ENCODE measurements at regions of chr18 and their contacts with region 1.

Region 1: GRCh38 chr18:54119524-54120019 is 104.9 kb downstream of the MBD2 start:
- DNase-seq: peak; percentile 55
- ATAC-seq: peak; percentile 93
- H3K4me3 ChIP-seq: peak overlapping the region; percentile 13 to 40; a peak in 3 of 4 replicates
- H3K27ac ChIP-seq: no peak overlapping the region
- H3K4me1 ChIP-seq: peaks cover 0 to 6% of the 10 kb centered on the region in 2 experiments; a peak in 1 of 4 replicates
- H3K27me3 ChIP-seq: no peaks in the 10 kb centered on the region
- CTCF ChIP-seq: peak; percentile 53 to 88 (median 76); a peak in 5 of 6 replicates
- POLR2A ChIP-seq: no peak
- RAD21 ChIP-seq: peak; percentile 75

Region 2: GRCh38 chr18:53489266-53489665 is 630.3 kb before region 1 on chr18:
- CTCF ChIA-PET with region 1: no interaction called
- POLR2A ChIA-PET with region 1: no interaction called
- RAD21 ChIA-PET with region 1: no interaction called
- intact Hi-C with region 1: no loop called
- DNase-seq: no peak
- ATAC-seq: no peak
- H3K4me3 ChIP-seq: no peak overlapping the region
- H3K27ac ChIP-seq: no peak overlapping the region
- H3K4me1 ChIP-seq: no peaks in the 10 kb centered on the region
- H3K27me3 ChIP-seq: no peaks in the 10 kb centered on the region
- CTCF ChIP-seq: no peak
- POLR2A ChIP-seq: no peak
- RAD21 ChIP-seq: no peak

Region 3: DNA sequence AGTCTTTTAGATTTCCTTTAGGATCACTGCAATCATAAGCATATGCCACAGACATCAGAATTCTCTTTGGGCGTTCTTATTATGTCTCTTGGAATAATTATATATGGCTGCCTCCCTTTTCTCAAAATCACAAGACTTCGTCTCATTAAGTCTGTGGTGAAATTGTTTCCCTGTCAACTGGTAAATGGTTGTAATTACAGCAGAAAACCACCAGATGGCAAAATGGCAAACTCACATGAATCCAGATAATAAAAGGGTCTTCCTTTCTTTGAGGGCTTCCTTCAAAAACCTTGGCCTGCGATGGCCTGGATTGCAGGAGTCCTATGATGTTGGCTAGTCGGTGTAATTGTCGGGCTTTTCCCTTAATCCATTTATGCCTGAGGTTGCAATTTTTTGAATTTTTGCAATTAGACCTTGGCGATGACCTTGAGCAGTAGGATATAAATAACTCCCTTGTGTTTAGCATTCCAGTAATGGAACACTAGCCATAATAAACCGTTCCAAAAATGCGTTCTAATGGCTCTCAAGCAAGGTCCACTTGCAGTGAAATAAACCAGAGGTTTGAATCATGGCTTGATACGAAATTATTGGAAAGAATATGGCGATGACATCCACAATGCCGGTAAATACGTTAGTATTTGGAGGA is 551.5 kb before region 1 on chr18:
- CTCF ChIA-PET with region 1: interaction called, 12 read pairs
- POLR2A ChIA-PET with region 1: no interaction called
- RAD21 ChIA-PET with region 1: interaction called in 1 of 2 experiments, 3 read pairs
- intact Hi-C with region 1: loop called (anchors 1 kb)
- DNase-seq: no peak
- ATAC-seq: no peak
- H3K4me3 ChIP-seq: no peak overlapping the region
- H3K27ac ChIP-seq: no peak overlapping the region
- H3K4me1 ChIP-seq: no peaks in the 10 kb centered on the region
- H3K27me3 ChIP-seq: no peaks in the 10 kb centered on the region
- CTCF ChIP-seq: peak; percentile 11 to 48 (median 46); a peak in 4 of 6 replicates
- POLR2A ChIP-seq: no peak
- RAD21 ChIP-seq: peak; percentile 30; the same call in 1 of the 2 replicates

Region 4: DNA sequence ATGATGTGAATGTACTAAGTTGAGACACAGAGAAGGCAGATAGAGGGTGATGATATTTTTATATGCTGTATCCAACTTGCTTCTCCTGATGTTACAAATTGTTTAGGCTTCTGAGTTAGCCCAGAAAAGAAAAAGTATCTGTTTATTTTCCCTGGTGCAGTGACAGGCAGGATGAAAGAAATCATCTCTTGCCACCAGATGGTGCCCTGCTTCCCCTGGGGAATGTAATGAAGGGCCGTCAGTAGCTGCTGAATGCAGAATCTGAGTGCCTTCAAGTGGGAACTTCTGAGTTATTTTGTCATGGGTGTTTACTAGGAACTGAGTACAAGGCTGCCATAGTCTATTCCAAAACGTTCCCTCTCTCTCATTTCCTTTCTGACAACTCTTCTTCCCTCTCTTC is 420.7 kb before region 1 on chr18:
- CTCF ChIA-PET with region 1: interaction called, 7 read pairs
- POLR2A ChIA-PET with region 1: no interaction called
- RAD21 ChIA-PET with region 1: no interaction called
- intact Hi-C with region 1: loop called (anchors 1 kb)
- DNase-seq: no peak
- ATAC-seq: no peak
- H3K4me3 ChIP-seq: no peak overlapping the region
- H3K27ac ChIP-seq: no peak overlapping the region
- H3K4me1 ChIP-seq: no peaks in the 10 kb centered on the region
- H3K27me3 ChIP-seq: no peaks in the 10 kb centered on the region
- CTCF ChIP-seq: peak; percentile 10 to 38 (median 14); a peak in 2 of 6 replicates
- POLR2A ChIP-seq: no peak
- RAD21 ChIP-seq: peak; percentile 16; the same call in 1 of the 2 replicates

Region 5: DNA sequence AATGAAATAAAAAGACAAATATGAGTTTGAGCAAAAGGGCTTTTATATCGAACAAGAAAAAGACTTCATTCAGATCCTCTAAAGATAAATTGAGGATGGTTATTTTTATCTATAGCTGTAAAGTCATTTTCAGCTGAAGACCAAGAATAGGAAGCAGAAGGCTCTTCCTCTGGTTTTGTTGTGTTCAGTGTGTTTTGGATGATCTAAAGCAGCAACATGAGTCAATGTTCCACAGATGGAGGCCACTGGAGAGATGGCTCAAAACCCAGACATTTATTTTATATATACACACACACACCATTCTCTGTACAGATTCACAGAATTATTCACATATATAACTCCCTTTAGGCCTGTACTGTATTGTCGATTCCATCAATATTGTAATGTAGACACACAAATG is 319.4 kb before region 1 on chr18:
- CTCF ChIA-PET with region 1: no interaction called
- POLR2A ChIA-PET with region 1: no interaction called
- RAD21 ChIA-PET with region 1: no interaction called
- intact Hi-C with region 1: no loop called
- DNase-seq: no peak
- ATAC-seq: no peak
- H3K4me3 ChIP-seq: no peak overlapping the region
- H3K27ac ChIP-seq: no peak overlapping the region
- H3K4me1 ChIP-seq: no peaks in the 10 kb centered on the region
- H3K27me3 ChIP-seq: no peaks in the 10 kb centered on the region
- CTCF ChIP-seq: no peak
- POLR2A ChIP-seq: no peak
- RAD21 ChIP-seq: no peak

Region 6: GRCh38 chr18:53909668-53910067 is 209.9 kb before region 1 on chr18:
- CTCF ChIA-PET with region 1: no interaction called
- POLR2A ChIA-PET with region 1: no interaction called
- RAD21 ChIA-PET with region 1: no interaction called
- intact Hi-C with region 1: loop called (anchors 1 kb)
- DNase-seq: peak; percentile 19
- ATAC-seq: peak; percentile 63
- H3K4me3 ChIP-seq: no peak overlapping the region
- H3K27ac ChIP-seq: no peak overlapping the region
- H3K4me1 ChIP-seq: no peaks in the 10 kb centered on the region
- H3K27me3 ChIP-seq: no peaks in the 10 kb centered on the region
- CTCF ChIP-seq: peak; percentile 6 to 68 (median 67); a peak in 4 of 6 replicates
- POLR2A ChIP-seq: no peak
- RAD21 ChIP-seq: peak; percentile 45

Region 7: DNA sequence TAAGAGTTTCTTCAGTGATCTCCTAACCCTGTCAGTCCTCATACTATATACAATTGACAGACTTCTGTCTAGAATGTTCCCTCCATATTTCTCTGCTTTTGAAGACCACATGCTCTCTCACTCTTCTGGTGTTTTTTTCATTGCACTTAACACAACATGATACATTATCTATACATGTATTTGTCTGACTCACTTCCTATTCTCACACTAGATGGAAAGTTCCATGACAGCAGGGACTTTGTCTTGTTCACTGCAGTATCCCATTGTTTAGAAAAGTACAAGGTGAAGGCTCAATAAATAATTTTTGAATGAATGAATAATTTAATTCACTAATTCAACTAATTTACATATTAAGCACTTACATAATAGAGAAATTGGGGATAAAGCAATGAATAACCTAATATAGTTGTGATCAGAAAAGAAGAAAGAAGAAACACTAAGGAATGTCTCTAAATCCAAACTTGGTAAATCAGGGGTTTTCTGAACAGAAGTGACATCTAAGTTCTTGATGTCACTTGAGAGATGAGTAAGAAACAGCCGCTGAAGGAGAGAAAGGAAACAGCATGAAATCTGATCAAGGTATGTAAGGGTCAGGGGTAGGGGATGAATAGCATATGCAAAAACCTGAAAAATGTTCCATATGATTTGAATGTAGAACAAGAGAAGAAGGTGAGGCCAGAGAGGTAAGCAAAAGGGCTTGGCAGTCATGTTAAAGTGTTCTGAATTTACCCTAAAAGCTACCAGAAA is 62.5 kb after region 1 on chr18:
- CTCF ChIA-PET with region 1: no interaction called
- POLR2A ChIA-PET with region 1: no interaction called
- RAD21 ChIA-PET with region 1: no interaction called
- intact Hi-C with region 1: no loop called
- DNase-seq: no peak
- ATAC-seq: no peak
- H3K4me3 ChIP-seq: no peak overlapping the region
- H3K27ac ChIP-seq: no peak overlapping the region
- H3K4me1 ChIP-seq: no peaks in the 10 kb centered on the region
- H3K27me3 ChIP-seq: no peaks in the 10 kb centered on the region
- CTCF ChIP-seq: no peak
- POLR2A ChIP-seq: no peak
- RAD21 ChIP-seq: no peak

Region 8: DNA sequence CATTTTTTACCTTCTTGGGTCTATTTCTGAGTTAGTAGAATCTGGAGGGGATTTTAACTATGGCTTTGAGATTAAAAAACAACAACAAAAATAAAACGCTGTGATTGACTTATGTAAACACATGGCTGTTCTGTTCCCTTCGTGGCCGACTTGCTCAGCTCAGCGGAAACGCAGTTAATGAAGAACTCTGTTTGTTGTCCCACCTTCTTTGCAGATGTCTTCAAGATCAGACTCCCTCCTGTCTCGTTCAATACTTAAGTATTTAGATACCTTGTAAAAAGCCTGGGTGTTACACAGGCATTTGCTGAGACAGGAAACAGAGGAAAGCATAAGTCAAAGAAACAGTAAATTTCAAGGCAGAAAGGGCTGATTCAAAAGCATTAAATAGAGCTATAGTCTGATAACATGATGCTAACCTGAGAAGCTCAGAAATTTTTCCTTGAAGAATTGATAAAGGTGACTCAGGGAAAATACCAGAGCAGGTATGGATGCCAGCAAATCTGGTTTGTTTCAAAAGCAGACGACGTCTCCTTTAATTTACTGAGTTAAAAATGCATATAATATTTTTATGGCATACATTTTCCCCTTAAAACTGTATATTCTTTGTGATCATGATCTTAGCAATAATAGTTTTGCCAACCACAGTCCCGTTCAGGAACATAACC is 128.1 kb after region 1 on chr18:
- CTCF ChIA-PET with region 1: no interaction called
- POLR2A ChIA-PET with region 1: no interaction called
- RAD21 ChIA-PET with region 1: no interaction called
- intact Hi-C with region 1: no loop called
- DNase-seq: no peak
- ATAC-seq: no peak
- H3K4me3 ChIP-seq: no peak overlapping the region
- H3K27ac ChIP-seq: no peak overlapping the region
- H3K4me1 ChIP-seq: no peaks in the 10 kb centered on the region
- H3K27me3 ChIP-seq: no peaks in the 10 kb centered on the region
- CTCF ChIP-seq: no peak
- POLR2A ChIP-seq: no peak
- RAD21 ChIP-seq: no peak

Measured in HCT116 (cell line).